ENCODE measurements at regions of chr17 and their contacts with region 1.

Region 1: DNA sequence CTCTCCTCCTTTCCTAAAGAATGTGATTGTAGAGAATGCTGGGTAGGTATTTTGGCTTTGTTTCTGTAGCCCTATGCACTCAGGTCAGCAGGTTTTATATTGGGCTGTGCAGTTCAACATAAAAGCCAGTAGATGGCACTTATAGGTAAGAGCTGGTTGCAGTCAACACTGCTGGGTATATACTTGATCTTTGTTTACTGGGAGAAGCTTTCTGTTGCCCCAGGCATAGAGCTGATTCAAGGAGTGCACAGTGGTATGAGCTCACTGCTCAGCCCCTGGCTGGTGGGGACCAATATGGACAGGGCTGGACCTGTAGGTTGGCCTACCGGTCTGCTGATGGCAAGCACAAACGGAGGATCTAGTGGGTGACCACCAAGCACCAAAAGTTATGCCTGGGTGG is 378.9 kb downstream of the PMP22 start:
- DNase-seq: no peak
- ATAC-seq: no peak
- H3K4me3 ChIP-seq: no peak overlapping the region
- H3K27ac ChIP-seq: no peak overlapping the region
- H3K4me1 ChIP-seq: no peaks in the 10 kb centered on the region
- H3K27me3 ChIP-seq: no peaks in the 10 kb centered on the region
- CTCF ChIP-seq: peak; percentile 22; the same call in 1 of the 2 replicates
- POLR2A ChIP-seq: no peak
- RAD21 ChIP-seq: no peak; the same call in 1 of the 2 replicates

Region 2: GRCh38 chr17:14143688-14144087 is 742.6 kb before region 1 on chr17:
- CTCF ChIA-PET with region 1: no interaction called
- POLR2A ChIA-PET with region 1: no interaction called
- dilution Hi-C with region 1: no loop called
- in situ Hi-C with region 1: no loop called
- intact Hi-C with region 1: no loop called
- DNase-seq: peak; percentile 15
- ATAC-seq: no peak
- H3K4me3 ChIP-seq: no peak overlapping the region
- H3K27ac ChIP-seq: no peak overlapping the region
- H3K4me1 ChIP-seq: peaks cover 3% of the 10 kb centered on the region; the same call in 1 of the 2 replicates
- H3K27me3 ChIP-seq: no peaks in the 10 kb centered on the region
- CTCF ChIP-seq: no peak
- POLR2A ChIP-seq: no peak
- RAD21 ChIP-seq: no peak

Region 3: GRCh38 chr17:14871921-14872320 is 14.3 kb before region 1 on chr17:
- CTCF ChIA-PET with region 1: no interaction called
- POLR2A ChIA-PET with region 1: no interaction called
- dilution Hi-C with region 1: no loop called
- in situ Hi-C with region 1: no loop called
- intact Hi-C with region 1: loop called (anchors 1 kb)
- DNase-seq: peak; percentile 69
- ATAC-seq: peak; percentile 60
- H3K4me3 ChIP-seq: no peak overlapping the region
- H3K27ac ChIP-seq: no peak overlapping the region
- H3K4me1 ChIP-seq: peaks cover 2% of the 10 kb centered on the region; the same call in 1 of the 2 replicates
- H3K27me3 ChIP-seq: no peaks in the 10 kb centered on the region
- CTCF ChIP-seq: no peak
- POLR2A ChIP-seq: no peak
- RAD21 ChIP-seq: no peak

Measured in IMR-90 (cell line).